Endothelial cell of umbilical vein (primary cell): ENCODE measurements at regions of chr7 and their contacts with region 1.

Region 1: GRCh38 chr7:4973728-4974198 is 14.8 kb upstream of the MMD2 start:
- DNase-seq: peak; percentile 90
- H3K4me3 ChIP-seq: peak overlapping the region; percentile 47 to 58 (median 57)
- H3K27ac ChIP-seq: no peak overlapping the region
- H3K4me1 ChIP-seq: peaks cover 7% of the 10 kb centered on the region
- H3K27me3 ChIP-seq: no peaks in the 10 kb centered on the region
- CTCF ChIP-seq: peak; percentile 87 to 93
- POLR2A ChIP-seq: peak; percentile 73

Region 2: DNA sequence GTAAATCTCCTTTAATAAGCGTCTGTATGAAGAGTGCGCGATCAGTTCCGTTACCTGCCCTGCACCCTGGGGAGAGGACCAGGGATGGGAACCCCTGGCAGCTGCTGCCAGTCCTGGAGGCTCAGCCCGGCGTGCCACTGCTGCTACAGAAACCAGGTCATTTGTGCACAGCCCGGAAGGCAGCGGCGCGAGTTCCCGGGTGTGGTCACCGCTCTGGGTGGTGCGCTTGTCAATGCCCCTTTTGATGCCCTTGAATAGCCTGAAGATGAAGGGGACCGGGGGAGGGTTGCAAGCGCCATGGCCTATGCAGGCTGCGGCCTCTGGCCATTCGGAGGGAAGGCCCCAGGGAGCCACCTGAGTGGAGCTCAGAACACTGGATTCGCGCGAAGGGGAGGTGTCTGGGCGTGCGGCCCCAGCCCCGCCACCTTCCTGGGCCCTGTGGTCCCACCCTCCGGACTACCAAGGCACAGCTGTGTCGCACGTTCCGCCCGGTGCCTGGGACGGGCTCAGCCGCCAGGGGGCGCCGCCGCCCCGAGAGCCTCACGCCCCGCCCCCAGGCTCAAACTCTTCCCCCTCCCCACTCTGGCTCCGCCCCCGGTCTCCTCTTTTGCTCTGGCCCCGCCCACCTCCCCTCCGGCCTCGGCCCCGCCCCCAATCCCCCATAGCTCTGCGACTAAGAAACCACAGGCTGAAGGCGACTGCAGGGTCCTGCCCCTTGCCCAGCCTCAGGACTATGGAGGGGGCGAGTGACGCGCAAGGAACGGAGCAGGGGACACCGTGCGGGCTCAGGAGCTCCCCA is 181.8 kb before region 1 on chr7:
- CTCF ChIA-PET with region 1: interaction called, 11 read pairs
- POLR2A ChIA-PET with region 1: no interaction called
- dilution Hi-C with region 1: no loop called
- intact Hi-C with region 1: no loop called
- DNase-seq: peak; percentile 51
- H3K4me3 ChIP-seq: peak overlapping the region in 1 of 3 experiments; percentile 23
- H3K27ac ChIP-seq: no peak overlapping the region
- H3K4me1 ChIP-seq: no peaks in the 10 kb centered on the region
- H3K27me3 ChIP-seq: no peaks in the 10 kb centered on the region
- CTCF ChIP-seq: peak; percentile 62 to 88
- POLR2A ChIP-seq: no peak

Region 3: GRCh38 chr7:4861673-4862072 is 112.1 kb before region 1 on chr7 and contains the start of gene PAPOLB:
- CTCF ChIA-PET with region 1: no interaction called
- POLR2A ChIA-PET with region 1: no interaction called
- dilution Hi-C with region 1: no loop called
- intact Hi-C with region 1: no loop called
- DNase-seq: no peak
- H3K4me3 ChIP-seq: peak within 1 kb of the TSS in 2 of 3 experiments; percentile 21 to 40
- H3K27ac ChIP-seq: no peak within 1 kb of the TSS
- H3K4me1 ChIP-seq: no peaks in the 10 kb centered on the region
- H3K27me3 ChIP-seq: peaks cover 18 to 38% of the 10 kb centered on the region in 2 experiments
- CTCF ChIP-seq: no peak
- POLR2A ChIP-seq: no peak
- total RNA-seq, gene PAPOLB: 0.07 TPM in 2 replicates

Region 4: GRCh38 chr7:5045558-5046396 is 72.0 kb after region 1 on chr7 and contains the start of gene RBAK:
- CTCF ChIA-PET with region 1: interaction called, 7 read pairs
- POLR2A ChIA-PET with region 1: no interaction called
- dilution Hi-C with region 1: no loop called
- intact Hi-C with region 1: loop called (anchors 1 kb)
- DNase-seq: peak; percentile 86
- H3K4me3 ChIP-seq: peak within 1 kb of the TSS; percentile 63 to 86 (median 68)
- H3K27ac ChIP-seq: peak within 1 kb of the TSS; percentile 74
- H3K4me1 ChIP-seq: peaks cover 2% of the 10 kb centered on the region
- H3K27me3 ChIP-seq: no peaks in the 10 kb centered on the region
- CTCF ChIP-seq: no peak
- POLR2A ChIP-seq: peak; percentile 84
- total RNA-seq, gene RBAK: 7.4 and 8.6 TPM in 2 replicates

Region 5: DNA sequence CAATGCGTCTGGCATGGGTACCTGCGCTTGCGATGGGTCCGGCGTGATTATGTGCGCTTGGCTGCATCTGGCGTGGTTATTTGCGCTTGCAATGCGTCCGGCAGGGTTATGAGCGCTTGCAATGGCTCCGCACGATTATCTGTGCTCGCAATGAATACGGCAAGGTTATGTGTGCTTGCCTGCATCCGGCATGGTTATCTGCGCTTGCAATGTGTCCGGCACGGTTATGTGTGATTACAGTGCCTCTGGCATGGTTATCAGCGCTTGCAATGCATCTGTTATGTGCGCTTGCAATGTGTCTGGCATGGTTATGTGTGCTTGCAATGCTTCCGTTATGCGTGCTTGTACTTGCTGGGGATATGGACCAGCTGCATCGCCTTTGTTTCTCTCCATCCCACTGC is 109.5 kb after region 1 on chr7:
- CTCF ChIA-PET with region 1: interaction called, 23 read pairs
- POLR2A ChIA-PET with region 1: no interaction called
- dilution Hi-C with region 1: no loop called
- intact Hi-C with region 1: loop called (anchors 1 kb)
- DNase-seq: no peak
- H3K4me3 ChIP-seq: no peak overlapping the region
- H3K27ac ChIP-seq: no peak overlapping the region
- H3K4me1 ChIP-seq: no peaks in the 10 kb centered on the region
- H3K27me3 ChIP-seq: no peaks in the 10 kb centered on the region
- CTCF ChIP-seq: no peak
- POLR2A ChIP-seq: no peak

Region 6: DNA sequence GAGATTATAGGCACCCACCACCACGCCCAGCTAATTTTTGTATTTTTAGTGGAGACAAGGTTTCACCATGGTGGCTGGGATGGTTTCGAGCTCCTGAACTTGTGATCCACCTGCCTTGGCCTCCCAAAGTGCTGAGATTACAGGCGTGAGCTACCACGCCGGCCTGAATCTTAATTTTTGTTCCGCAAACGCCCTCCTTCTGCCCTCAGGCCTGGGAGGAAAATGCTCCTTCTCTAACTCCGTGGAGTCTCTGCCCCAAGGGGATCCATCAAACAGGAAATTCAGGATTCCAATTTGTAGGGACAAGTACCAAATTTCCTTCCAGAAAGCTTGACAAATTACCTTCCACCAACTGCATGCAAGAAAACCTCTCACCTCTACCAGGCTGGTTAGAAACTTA is 115.1 kb after region 1 on chr7:
- CTCF ChIA-PET with region 1: interaction called, 23 read pairs
- POLR2A ChIA-PET with region 1: no interaction called
- dilution Hi-C with region 1: no loop called
- intact Hi-C with region 1: loop called (anchors 1 kb)
- DNase-seq: no peak
- H3K4me3 ChIP-seq: no peak overlapping the region
- H3K27ac ChIP-seq: no peak overlapping the region
- H3K4me1 ChIP-seq: no peaks in the 10 kb centered on the region
- H3K27me3 ChIP-seq: no peaks in the 10 kb centered on the region
- CTCF ChIP-seq: no peak
- POLR2A ChIP-seq: no peak